ENCODE measurements at regions of chr5 and their contacts with region 1.

Region 1: GRCh38 chr5:60649283-60649917 is 50.6 kb downstream of the DEPDC1B start:
- DNase-seq: peak; percentile 33
- ATAC-seq: peak; percentile 71
- H3K4me3 ChIP-seq: no peak overlapping the region
- H3K27ac ChIP-seq: no peak overlapping the region
- H3K4me1 ChIP-seq: peaks cover 0 to 9% of the 10 kb centered on the region in 2 experiments; a peak in 2 of 4 replicates
- H3K27me3 ChIP-seq: no peaks in the 10 kb centered on the region
- CTCF ChIP-seq: peak; percentile 61 to 73 (median 69); a peak in 5 of 6 replicates
- POLR2A ChIP-seq: no peak
- RAD21 ChIP-seq: peak; percentile 55

Region 2: GRCh38 chr5:60362158-60362557 is 287.2 kb before region 1 on chr5:
- CTCF ChIA-PET with region 1: no interaction called
- POLR2A ChIA-PET with region 1: no interaction called
- RAD21 ChIA-PET with region 1: no interaction called
- intact Hi-C with region 1: no loop called
- DNase-seq: no peak
- ATAC-seq: no peak
- H3K4me3 ChIP-seq: no peak overlapping the region
- H3K27ac ChIP-seq: no peak overlapping the region
- H3K4me1 ChIP-seq: no peaks in the 10 kb centered on the region
- H3K27me3 ChIP-seq: peaks cover 23% of the 10 kb centered on the region
- CTCF ChIP-seq: no peak
- POLR2A ChIP-seq: no peak
- RAD21 ChIP-seq: no peak

Region 3: DNA sequence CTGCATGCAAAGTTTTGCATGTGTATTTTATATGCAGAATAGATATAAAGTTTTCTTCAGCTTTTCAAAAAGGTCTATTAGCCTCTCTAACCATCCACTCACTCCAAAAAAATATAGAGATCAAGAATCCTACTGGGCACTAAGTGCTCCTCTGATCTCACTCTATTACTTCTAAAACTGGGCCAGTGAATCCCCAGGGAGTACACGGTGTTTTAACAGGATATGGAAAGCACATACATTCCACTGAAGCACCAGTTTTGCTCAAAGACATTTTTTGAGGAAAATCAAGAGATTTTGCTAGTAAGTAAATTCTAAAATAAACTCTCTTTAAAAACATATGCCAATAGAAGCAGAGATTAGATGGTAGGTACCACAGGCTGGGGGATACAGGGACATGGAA is 44.6 kb before region 1 on chr5:
- CTCF ChIA-PET with region 1: no interaction called
- POLR2A ChIA-PET with region 1: no interaction called
- RAD21 ChIA-PET with region 1: no interaction called
- intact Hi-C with region 1: no loop called
- DNase-seq: no peak
- ATAC-seq: no peak
- H3K4me3 ChIP-seq: no peak overlapping the region
- H3K27ac ChIP-seq: no peak overlapping the region
- H3K4me1 ChIP-seq: no peaks in the 10 kb centered on the region
- H3K27me3 ChIP-seq: no peaks in the 10 kb centered on the region
- CTCF ChIP-seq: no peak
- POLR2A ChIP-seq: no peak
- RAD21 ChIP-seq: no peak

Region 4: GRCh38 chr5:60668686-60669304 is 19.4 kb after region 1 on chr5:
- CTCF ChIA-PET with region 1: interaction called, 11 read pairs
- POLR2A ChIA-PET with region 1: no interaction called
- RAD21 ChIA-PET with region 1: no interaction called
- intact Hi-C with region 1: no loop called
- DNase-seq: peak; percentile 31
- ATAC-seq: no peak
- H3K4me3 ChIP-seq: no peak overlapping the region
- H3K27ac ChIP-seq: no peak overlapping the region
- H3K4me1 ChIP-seq: no peaks in the 10 kb centered on the region
- H3K27me3 ChIP-seq: no peaks in the 10 kb centered on the region
- CTCF ChIP-seq: peak; percentile 36 to 75 (median 40); a peak in 4 of 6 replicates
- POLR2A ChIP-seq: no peak
- RAD21 ChIP-seq: peak; percentile 44; the same call in 1 of the 2 replicates

Region 5: GRCh38 chr5:60826653-60827052 is 177.3 kb after region 1 on chr5:
- CTCF ChIA-PET with region 1: no interaction called
- POLR2A ChIA-PET with region 1: no interaction called
- RAD21 ChIA-PET with region 1: no interaction called
- intact Hi-C with region 1: no loop called
- DNase-seq: no peak
- ATAC-seq: no peak
- H3K4me3 ChIP-seq: no peak overlapping the region
- H3K27ac ChIP-seq: no peak overlapping the region
- H3K4me1 ChIP-seq: no peaks in the 10 kb centered on the region
- H3K27me3 ChIP-seq: no peaks in the 10 kb centered on the region
- CTCF ChIP-seq: no peak
- POLR2A ChIP-seq: no peak
- RAD21 ChIP-seq: no peak